Psoas muscle (tissue), 8 donors: ENCODE measurements at regions of chr12 and their contacts with region 1.

Region 1: DNA sequence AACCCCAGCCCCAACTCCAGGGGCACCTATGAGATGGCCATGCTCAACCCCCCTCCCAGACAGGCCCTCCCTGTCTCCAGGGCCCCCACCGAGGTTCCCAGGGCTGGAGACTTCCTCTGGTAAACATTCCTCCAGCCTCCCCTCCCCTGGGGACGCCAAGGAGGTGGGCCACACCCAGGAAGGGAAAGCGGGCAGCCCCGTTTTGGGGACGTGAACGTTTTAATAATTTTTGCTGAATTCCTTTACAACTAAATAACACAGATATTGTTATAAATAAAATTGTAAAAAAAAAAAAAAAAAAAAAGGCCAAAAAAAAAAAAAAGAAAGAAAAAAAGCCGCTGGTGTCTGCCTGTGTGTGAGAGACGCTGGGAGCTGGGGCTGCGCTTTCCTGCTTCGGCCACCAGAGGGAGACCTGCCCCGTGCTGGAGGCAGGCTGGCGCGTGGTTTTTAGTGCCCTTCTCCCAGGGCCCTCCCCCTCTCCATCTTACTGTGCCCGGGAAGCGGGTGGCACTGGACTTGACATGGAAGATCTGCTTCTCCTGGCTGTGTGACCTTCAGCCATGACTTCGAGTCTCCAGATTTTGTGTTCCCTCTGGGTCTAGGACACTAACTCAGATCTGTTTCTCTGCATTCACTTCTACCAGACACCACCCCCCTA is 3.4 kb upstream of the NXPH4 start:
- DNase-seq: peak; percentile 84 to 93
- ATAC-seq: peak; percentile 82 to 90 (median 88)
- H3K4me3 ChIP-seq: no peak overlapping the region
- H3K27ac ChIP-seq: no peak overlapping the region
- H3K4me1 ChIP-seq: peaks cover 14% of the 10 kb centered on the region
- H3K27me3 ChIP-seq: peaks cover 0 to 32% (median 17%) of the 10 kb centered on the region in 3 donors
- CTCF ChIP-seq: peak; percentile 94

Region 2: DNA sequence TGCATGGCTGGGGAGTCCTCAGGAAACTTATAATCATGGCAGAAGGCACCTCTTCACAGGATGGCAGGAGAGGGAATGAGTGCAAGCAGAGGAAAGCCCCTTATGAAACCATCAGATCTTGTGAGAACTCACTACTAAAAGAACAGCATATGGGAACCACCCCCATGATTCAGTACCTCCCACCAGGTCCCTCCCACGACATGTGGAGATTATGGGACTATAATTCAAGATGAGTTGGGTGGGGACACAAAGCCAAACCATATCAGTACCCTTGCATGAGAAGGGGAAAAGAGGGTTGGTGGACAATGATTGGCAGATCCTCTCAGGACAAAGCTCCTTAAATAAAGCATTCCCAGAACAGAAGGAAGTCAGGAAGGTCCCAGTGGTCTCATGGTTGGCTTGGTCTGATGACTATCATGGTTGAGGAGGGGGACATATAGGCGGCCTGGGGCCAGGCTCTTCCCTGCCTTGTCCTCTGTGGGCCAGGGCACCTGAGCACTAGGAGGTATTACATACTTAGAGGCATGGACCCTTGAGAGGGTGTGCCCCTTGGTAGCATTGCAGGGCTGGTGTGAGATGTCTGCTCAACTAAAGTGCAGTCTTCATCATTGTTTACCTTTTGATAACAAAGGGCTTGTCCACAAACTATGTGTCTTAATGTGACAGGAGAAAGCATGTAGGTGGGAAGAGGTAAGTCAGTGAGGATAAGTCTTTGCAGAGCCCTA is 427.9 kb before region 1 on chr12:
- intact Hi-C with region 1: no loop called
- DNase-seq: no peak
- ATAC-seq: no peak
- H3K4me3 ChIP-seq: no peak overlapping the region
- H3K27ac ChIP-seq: no peak overlapping the region
- H3K4me1 ChIP-seq: no peaks in the 10 kb centered on the region
- H3K27me3 ChIP-seq: no peaks in the 10 kb centered on the region
- CTCF ChIP-seq: no peak

Region 3: GRCh38 chr12:57238854-57239554 is 25.8 kb after region 1 on chr12:
- intact Hi-C with region 1: loop called (anchors 1 to 2 kb)
- DNase-seq: peak; percentile 91 to 95
- ATAC-seq: peak; percentile 67 to 73 (median 72)
- H3K4me3 ChIP-seq: peak overlapping the region; percentile 65
- H3K27ac ChIP-seq: peak overlapping the region; percentile 61
- H3K4me1 ChIP-seq: peaks cover 48% of the 10 kb centered on the region
- H3K27me3 ChIP-seq: peaks cover 0 to 23% (median 0%) of the 10 kb centered on the region in 3 donors
- CTCF ChIP-seq: peak; percentile 100

Region 4: DNA sequence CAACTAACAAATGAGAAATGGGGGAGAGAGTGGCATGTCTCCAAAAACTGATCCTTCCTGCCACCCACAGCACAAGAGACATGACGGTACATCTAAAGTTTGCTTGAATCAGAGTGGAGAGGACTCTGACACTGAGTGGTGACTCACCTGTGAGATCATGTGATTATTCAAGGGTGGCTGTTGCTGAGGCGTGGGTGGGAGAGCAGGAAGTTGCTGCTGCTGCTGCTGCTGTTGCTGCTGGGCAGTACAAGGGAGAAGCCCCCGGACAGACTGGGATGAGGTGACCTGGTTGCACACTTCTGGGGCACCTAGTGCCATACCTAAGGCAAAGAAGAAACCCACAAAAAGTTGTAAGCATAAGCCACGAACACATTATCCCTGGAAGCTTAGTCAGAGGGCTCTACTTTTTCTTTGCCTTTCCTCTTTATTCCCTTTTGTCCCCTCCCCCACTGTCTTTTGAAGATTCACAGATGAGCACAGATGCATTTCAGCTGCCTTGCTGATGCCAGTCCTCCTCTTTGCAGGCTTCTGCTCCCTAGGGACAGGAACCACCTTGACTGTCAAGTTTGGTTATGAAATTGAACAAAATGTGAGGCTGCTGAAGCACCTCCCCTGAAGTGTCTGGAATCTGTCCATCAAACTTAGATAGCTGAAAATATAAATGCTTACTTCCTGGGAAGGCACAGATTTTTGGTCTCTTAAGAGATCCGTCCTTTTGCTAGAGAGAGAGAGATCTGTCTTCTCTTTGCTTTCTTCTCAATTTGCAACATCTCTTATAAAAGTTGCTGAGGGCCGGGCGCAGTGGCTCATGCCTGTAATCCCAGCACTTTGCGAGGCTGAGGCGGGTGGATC is 67.2 kb after region 1 on chr12:
- intact Hi-C with region 1: loop called (anchors 2 kb)
- DNase-seq: no peak
- ATAC-seq: peak; percentile 75 to 88 (median 84)
- H3K4me3 ChIP-seq: no peak overlapping the region
- H3K27ac ChIP-seq: peak overlapping the region; percentile 55
- H3K4me1 ChIP-seq: no peaks in the 10 kb centered on the region
- H3K27me3 ChIP-seq: no peaks in the 10 kb centered on the region
- CTCF ChIP-seq: no peak